ENCODE measurements at regions of chr1 and their contacts with region 1.

Region 1: GRCh38 chr1:226814751-226815496 is 55.5 kb upstream of the PSEN2 start:
- DNase-seq: no peak
- ATAC-seq: no peak
- H3K4me3 ChIP-seq: no peak overlapping the region
- H3K4me3 Mint-ChIP-seq: no peak overlapping the region
- H3K27ac ChIP-seq: no peak overlapping the region
- H3K27ac Mint-ChIP-seq: no peak overlapping the region
- H3K4me1 ChIP-seq: no peaks in the 10 kb centered on the region
- H3K4me1 Mint-ChIP-seq: peaks cover 2% of the 10 kb centered on the region
- H3K27me3 ChIP-seq: no peaks in the 10 kb centered on the region
- H3K27me3 Mint-ChIP-seq: no peaks in the 10 kb centered on the region
- CTCF ChIP-seq: no peak

Region 2: GRCh38 chr1:226766565-226766964 is 48.4 kb before region 1 on chr1:
- CTCF ChIA-PET with region 1: no interaction called
- POLR2A ChIA-PET with region 1: no interaction called
- intact Hi-C with region 1: loop called in 1 of 2 experiments (anchors 5 kb)
- DNase-seq: no peak
- ATAC-seq: no peak
- H3K4me3 ChIP-seq: no peak overlapping the region
- H3K4me3 Mint-ChIP-seq: no peak overlapping the region
- H3K27ac ChIP-seq: no peak overlapping the region
- H3K27ac Mint-ChIP-seq: no peak overlapping the region
- H3K4me1 ChIP-seq: peaks cover 17% of the 10 kb centered on the region
- H3K4me1 Mint-ChIP-seq: peaks cover 23% of the 10 kb centered on the region
- H3K27me3 ChIP-seq: no peaks in the 10 kb centered on the region
- H3K27me3 Mint-ChIP-seq: no peaks in the 10 kb centered on the region
- CTCF ChIP-seq: no peak

Region 3: DNA sequence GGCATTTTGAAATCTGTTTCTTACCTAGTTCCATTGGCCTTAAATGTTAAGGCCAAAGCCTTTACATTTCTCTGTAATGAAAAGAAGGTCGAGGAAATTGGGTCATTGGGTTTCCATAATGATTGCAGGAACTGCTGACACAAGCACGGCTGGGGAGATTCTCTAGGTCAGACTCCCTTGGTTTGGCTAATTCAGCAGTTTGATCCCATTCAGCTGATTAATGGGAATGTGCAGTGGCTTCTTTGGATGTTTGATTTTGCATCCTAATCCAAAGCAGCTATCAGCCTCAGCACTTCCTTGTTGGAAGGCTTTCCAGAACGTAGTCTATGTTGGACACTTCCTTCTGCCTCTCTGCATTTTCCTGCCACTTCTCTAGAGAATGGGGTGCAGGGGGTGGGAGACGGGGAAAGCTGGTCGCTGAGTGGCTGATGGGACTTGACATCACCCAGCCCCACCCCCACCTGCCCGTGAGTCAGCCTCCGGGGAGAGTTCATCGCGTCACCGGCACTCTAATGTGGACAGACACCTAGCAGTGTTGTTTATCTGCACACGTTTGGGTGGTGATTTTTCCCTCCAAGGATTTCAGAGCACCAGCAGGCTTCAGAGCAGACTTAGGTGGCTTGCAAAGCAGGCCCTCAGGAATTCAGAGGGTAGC is 60.8 kb after region 1 on chr1:
- CTCF ChIA-PET with region 1: no interaction called
- POLR2A ChIA-PET with region 1: no interaction called
- intact Hi-C with region 1: no loop called
- DNase-seq: peak in 1 of 9 experiments; percentile 27
- ATAC-seq: no peak
- H3K4me3 ChIP-seq: no peak overlapping the region
- H3K4me3 Mint-ChIP-seq: no peak overlapping the region
- H3K27ac ChIP-seq: no peak overlapping the region
- H3K27ac Mint-ChIP-seq: no peak overlapping the region
- H3K4me1 ChIP-seq: peaks cover 5% of the 10 kb centered on the region
- H3K4me1 Mint-ChIP-seq: peaks cover 9% of the 10 kb centered on the region
- H3K27me3 ChIP-seq: no peaks in the 10 kb centered on the region
- H3K27me3 Mint-ChIP-seq: no peaks in the 10 kb centered on the region
- CTCF ChIP-seq: no peak

Region 4: DNA sequence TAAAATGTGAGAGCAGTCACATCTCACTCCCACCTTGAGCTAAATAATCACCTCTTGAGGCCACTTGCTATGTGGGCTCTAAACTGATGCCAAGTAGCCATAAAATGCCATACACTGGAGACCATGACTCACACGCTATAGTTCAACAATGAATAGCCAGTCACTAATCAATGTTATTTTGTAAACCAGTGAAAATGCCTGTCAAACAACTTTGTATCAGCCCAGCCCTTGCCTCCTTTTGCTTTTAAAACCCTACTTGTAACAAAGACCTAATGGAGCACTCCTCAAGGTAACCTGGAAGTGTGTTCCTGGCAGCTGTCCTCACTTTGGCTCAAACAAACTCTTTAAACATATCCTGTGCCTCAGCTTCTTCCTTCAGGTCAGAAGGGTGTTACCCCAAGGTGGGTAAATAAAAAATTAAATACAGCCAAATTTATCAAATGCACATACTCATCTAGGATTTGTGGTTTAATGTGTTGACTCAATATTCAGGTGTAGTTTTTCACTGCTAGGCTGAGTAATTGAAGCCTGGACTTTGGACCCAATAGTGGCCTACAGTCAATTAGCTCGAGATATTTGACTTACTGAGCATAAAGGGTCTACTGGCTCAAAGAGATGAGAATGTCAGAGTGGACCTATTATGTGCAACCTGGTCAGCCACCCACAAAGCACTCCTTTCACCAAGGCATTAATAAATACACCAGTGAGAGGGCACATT is 279.5 kb after region 1 on chr1:
- CTCF ChIA-PET with region 1: no interaction called
- POLR2A ChIA-PET with region 1: no interaction called
- intact Hi-C with region 1: no loop called
- DNase-seq: no peak
- ATAC-seq: no peak
- H3K4me3 ChIP-seq: no peak overlapping the region
- H3K4me3 Mint-ChIP-seq: no peak overlapping the region
- H3K27ac ChIP-seq: no peak overlapping the region
- H3K27ac Mint-ChIP-seq: no peak overlapping the region
- H3K4me1 ChIP-seq: no peaks in the 10 kb centered on the region
- H3K4me1 Mint-ChIP-seq: no peaks in the 10 kb centered on the region
- H3K27me3 ChIP-seq: no peaks in the 10 kb centered on the region
- H3K27me3 Mint-ChIP-seq: no peaks in the 10 kb centered on the region
- CTCF ChIP-seq: no peak

Measured in CD8-positive, alpha-beta T cell (primary cell).